Ascending aorta (tissue), 2 donors: ENCODE measurements at regions of chr2 and their contacts with region 1.

Region 1: DNA sequence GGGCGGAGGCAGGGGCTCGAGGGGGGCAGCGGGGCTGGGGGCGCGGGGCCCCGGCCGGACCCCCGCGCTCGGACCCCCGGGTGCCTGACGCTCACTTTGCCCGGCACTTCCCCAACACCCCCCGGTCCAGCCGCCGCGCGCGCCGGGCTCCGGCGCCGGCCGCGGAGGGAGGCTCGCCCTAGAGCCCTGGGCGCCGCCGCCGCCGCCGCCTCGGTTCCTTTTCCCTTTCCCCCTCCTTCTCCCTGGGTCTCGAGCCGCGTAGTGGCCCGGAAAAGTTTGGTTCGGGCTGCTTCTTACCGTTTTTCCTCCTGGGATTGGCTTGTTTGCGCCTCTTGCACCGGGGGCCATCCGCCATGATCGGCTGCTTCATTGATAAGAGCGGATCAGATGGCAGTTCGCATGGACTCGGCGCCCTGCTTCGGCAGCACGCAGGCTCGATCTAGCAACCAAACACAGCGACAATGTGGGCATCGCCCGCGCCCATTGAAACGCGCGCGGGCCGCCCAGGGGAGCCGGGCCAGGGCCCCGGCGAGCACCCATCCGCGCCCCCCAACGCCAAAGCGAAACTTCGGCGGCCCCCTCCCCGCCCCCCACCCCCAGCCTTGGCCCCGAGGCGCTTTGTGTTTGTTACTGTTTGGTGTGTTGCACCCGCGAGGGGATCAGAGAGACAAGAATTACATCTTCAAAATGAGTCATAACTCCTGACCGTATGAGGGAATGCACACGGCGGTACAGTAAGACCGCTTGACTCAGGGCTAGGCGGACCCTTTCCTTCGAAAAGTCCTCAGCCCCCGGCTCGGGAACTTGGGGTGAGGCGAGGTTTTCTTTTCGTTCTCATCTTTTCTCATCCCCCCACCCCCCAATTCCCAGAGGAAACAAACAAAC is 2.7 kb downstream of the ZEB2 start:
- DNase-seq: peak in 1 of 2 donors; percentile 87
- H3K4me3 ChIP-seq: peak overlapping the region; percentile 85 to 89
- H3K27ac ChIP-seq: peak overlapping the region; percentile 99 to 100
- H3K4me1 ChIP-seq: peaks cover 0 to 5% of the 10 kb centered on the region in 2 donors
- H3K27me3 ChIP-seq: no peaks in the 10 kb centered on the region
- CTCF ChIP-seq: no peak

Region 2: GRCh38 chr2:143482316-143482715 is 1034.9 kb before region 1 on chr2:
- intact Hi-C with region 1: loop called (anchors 5 kb)
- DNase-seq: no peak
- H3K4me3 ChIP-seq: peak overlapping the region in 1 of 2 donors; percentile 5
- H3K27ac ChIP-seq: peak overlapping the region; percentile 69 to 75
- H3K4me1 ChIP-seq: peaks cover 11 to 19% of the 10 kb centered on the region in 2 donors
- H3K27me3 ChIP-seq: no peaks in the 10 kb centered on the region
- CTCF ChIP-seq: no peak

Region 3: GRCh38 chr2:144389151-144389929 is 127.9 kb before region 1 on chr2:
- intact Hi-C with region 1: loop called (anchors 5 kb)
- DNase-seq: no peak
- H3K4me3 ChIP-seq: no peak overlapping the region
- H3K27ac ChIP-seq: peak overlapping the region; percentile 35 to 55
- H3K4me1 ChIP-seq: no peaks in the 10 kb centered on the region
- H3K27me3 ChIP-seq: no peaks in the 10 kb centered on the region
- CTCF ChIP-seq: no peak

Region 4: DNA sequence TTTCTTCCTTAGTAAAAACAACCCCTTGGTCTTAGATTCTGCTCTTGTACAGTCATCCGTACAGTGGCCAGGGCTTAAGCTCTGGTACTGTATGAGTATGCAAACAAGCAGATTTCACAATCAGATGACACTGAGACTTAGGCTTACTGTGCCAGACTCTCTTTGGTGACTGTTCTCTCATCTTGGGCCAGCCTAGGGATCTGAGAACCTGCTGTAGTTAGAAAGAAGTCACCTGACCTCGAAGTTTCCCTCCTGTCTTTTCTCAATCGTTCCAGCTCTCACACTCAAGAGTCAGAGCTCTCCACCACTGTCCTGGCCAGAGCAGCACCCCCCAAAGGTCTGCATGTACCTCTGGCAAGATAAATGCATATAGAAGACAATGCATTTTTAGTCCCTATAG is 60.5 kb before region 1 on chr2:
- intact Hi-C with region 1: loop called (anchors 2 kb)
- DNase-seq: peak in 1 of 2 donors; percentile 70
- H3K4me3 ChIP-seq: no peak overlapping the region
- H3K27ac ChIP-seq: peak overlapping the region in 1 of 2 donors; percentile 43
- H3K4me1 ChIP-seq: peaks cover 11 to 63% of the 10 kb centered on the region in 2 donors
- H3K27me3 ChIP-seq: no peaks in the 10 kb centered on the region
- CTCF ChIP-seq: no peak

Region 5: DNA sequence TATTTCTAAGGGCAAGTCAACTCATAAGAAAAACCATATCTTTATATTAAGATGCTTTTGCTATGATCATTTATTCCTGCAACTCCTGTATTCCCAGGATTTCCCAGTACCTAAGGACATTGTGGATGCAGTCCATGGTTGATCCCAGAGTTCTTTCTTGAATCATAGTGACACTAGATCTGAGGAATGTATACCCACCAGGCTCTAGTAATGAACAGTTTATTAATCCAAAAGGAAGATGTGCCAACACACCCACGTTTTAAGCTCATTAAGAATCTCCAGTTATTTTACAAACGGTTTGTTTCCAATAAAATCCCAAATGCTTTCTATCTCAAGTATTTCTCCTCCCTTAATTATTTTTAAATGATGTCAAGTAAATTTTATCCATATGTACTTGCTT is 213.5 kb after region 1 on chr2:
- intact Hi-C with region 1: no loop called
- DNase-seq: no peak
- H3K4me3 ChIP-seq: no peak overlapping the region
- H3K27ac ChIP-seq: no peak overlapping the region
- H3K4me1 ChIP-seq: no peaks in the 10 kb centered on the region
- H3K27me3 ChIP-seq: no peaks in the 10 kb centered on the region
- CTCF ChIP-seq: no peak

Region 6: DNA sequence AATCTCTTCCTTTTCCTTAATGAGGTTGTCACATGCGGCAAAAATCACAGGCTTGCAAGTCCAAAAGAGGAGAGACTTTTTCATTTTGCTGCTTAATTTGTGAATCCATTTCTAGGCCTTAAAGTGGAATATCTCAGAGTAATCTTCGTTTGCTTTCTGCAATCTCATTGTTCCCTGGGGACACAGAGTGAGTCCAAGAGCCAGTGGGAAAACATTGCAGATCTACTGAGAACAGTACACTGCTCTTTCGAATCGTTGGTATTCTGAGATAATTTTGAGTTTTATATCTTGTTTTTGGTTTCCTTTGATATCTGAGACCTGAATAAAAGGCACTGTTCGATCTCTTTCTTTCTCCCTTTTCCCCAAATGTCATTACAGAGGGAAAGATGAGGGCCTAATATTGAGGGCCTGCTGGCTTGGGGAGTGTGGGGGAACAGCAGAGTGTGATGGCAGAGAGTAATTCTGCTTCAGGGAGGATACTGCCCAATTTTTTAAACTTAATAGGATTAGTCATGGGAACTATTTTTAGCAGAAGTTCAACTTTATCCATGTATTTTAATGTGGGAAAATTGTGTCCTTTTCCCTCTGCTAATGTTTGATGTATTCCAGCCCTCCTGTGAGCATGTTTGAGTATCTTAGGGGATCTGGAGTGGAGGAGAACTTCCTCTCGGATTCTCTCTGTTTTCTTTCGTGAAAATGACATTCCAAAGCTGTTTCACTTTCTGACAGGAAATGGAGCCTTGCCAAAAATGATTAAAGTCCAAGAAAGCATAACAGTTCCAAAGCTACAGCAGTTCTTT is 420.9 kb after region 1 on chr2:
- intact Hi-C with region 1: loop called (anchors 5 kb)
- DNase-seq: no peak
- H3K4me3 ChIP-seq: peak overlapping the region; percentile 11 to 48
- H3K27ac ChIP-seq: peak overlapping the region; percentile 76 to 82
- H3K4me1 ChIP-seq: peaks cover 7 to 44% of the 10 kb centered on the region in 2 donors
- H3K27me3 ChIP-seq: no peaks in the 10 kb centered on the region
- CTCF ChIP-seq: no peak

Region 7: GRCh38 chr2:145007093-145007959 is 490.1 kb after region 1 on chr2:
- intact Hi-C with region 1: loop called (anchors 5 kb)
- DNase-seq: peak in 1 of 2 donors; percentile 87
- H3K4me3 ChIP-seq: peak overlapping the region in 1 of 2 donors; percentile 46
- H3K27ac ChIP-seq: peak overlapping the region; percentile 82 to 87
- H3K4me1 ChIP-seq: peaks cover 5% of the 10 kb centered on the region in 2 donors
- H3K27me3 ChIP-seq: no peaks in the 10 kb centered on the region
- CTCF ChIP-seq: no peak